T-cell (primary cell): ENCODE measurements at regions of chr7 and their contacts with region 1.

Region 1: DNA sequence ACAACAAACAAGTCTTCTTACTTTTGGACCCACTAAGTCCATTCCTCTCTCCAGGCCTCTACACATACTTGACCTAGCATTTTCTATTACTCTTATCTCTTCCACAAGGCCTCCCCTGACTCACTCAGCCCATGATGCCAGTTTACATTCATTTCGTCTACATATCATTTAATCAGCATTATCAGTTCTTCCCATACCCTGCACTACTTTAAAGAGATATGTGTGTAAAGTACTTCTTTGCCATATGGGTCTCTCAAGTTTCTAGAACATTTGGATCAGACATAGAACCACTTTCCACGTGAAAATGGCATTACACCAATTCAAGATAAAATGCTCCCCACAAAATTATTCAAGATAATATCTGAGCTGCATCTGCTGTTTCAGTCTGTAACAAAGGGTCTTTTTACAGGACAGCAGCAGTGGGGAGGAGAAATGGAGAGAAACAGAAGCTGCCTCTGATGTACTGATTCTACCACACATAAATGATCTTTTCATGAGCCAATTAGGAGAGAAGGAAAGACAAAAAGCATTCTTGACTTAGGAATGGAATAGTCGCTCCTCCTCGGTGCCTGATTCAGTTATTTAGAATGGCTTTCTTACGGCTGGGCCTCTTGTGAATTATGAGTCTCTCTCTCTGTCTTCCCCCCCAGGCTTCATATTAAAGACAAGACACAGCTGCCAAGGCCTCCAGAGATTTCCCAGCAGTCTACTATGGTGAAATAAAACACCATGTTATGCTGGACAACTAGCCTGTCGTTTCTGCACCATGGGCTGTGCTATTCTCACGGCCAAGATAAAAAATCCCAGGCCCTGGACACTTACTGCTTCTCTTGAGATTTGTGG is 46.9 kb upstream of the SEPTIN7 start:
- DNase-seq: no peak
- ATAC-seq: no peak
- H3K4me3 ChIP-seq: no peak overlapping the region
- H3K4me3 Mint-ChIP-seq: no peak overlapping the region
- H3K27ac ChIP-seq: no peak overlapping the region
- H3K27ac Mint-ChIP-seq: no peak overlapping the region
- H3K4me1 ChIP-seq: no peaks in the 10 kb centered on the region
- H3K4me1 Mint-ChIP-seq: peaks cover 6 to 13% (median 7%) of the 10 kb centered on the region in 3 donors
- H3K27me3 ChIP-seq: peaks cover 0 to 3% of the 10 kb centered on the region in 2 experiments
- H3K27me3 Mint-ChIP-seq: no peaks in the 10 kb centered on the region

Region 2: GRCh38 chr7:35670856-35671569 is 83.0 kb before region 1 on chr7:
- CTCF ChIA-PET with region 1: no interaction called
- POLR2A ChIA-PET with region 1: no interaction called
- DNase-seq: no peak
- ATAC-seq: no peak
- H3K4me3 ChIP-seq: no peak overlapping the region
- H3K4me3 Mint-ChIP-seq: no peak overlapping the region
- H3K27ac ChIP-seq: no peak overlapping the region
- H3K27ac Mint-ChIP-seq: peak overlapping the region in 1 of 2 donors; percentile 20
- H3K4me1 ChIP-seq: peaks cover 0 to 4% of the 10 kb centered on the region in 2 experiments
- H3K4me1 Mint-ChIP-seq: peaks cover 34 to 58% (median 52%) of the 10 kb centered on the region in 3 donors
- H3K27me3 ChIP-seq: no peaks in the 10 kb centered on the region
- H3K27me3 Mint-ChIP-seq: no peaks in the 10 kb centered on the region

Region 3: DNA sequence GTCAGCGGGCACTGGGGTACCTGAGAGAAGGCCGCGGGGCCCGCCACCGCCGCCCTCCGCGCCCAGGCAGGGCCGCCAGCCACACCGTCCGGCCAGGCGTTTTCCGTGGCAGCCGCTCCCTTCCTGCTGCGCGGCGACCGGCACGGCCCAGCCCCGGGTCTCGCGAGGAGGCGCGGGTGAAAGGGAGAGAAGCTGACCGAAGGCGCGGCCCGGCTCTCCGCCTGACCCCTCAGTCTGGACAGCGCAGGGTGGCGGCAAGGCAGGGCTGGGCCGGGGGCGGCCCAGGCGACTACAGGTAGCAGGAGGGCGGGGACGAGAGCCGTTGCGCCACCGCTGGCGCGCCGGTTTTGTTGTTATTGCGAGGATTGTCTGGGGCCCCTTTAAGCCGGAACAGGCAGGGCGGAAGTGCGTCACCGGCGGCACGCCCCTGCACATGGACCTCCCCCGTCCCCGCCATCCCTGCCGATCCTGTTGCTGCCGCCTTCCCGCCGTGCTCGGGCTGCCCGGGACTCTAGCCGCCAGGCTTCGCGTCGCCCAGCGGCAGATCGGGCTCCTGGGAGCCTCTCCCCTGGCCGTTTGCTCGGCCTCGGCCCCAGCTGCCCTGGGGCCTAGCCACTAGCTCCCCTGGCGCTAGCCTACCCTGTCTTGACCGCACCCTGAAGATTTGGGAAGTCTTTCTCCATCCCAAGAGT is 59.1 kb before region 1 on chr7 and contains the start of gene HERPUD2:
- CTCF ChIA-PET with region 1: no interaction called
- POLR2A ChIA-PET with region 1: interaction called in 1 of 2 experiments, 10 read pairs
- DNase-seq: peak; percentile 78 to 96 (median 91)
- ATAC-seq: peak; percentile 87 to 88 (median 88)
- H3K4me3 ChIP-seq: peak within 1 kb of the TSS; percentile 92 to 96
- H3K4me3 Mint-ChIP-seq: peak within 1 kb of the TSS; percentile 97 to 99 (median 97)
- H3K27ac ChIP-seq: peak within 1 kb of the TSS; percentile 94
- H3K27ac Mint-ChIP-seq: peak within 1 kb of the TSS; percentile 98 to 99
- H3K4me1 ChIP-seq: peaks cover 26 to 32% of the 10 kb centered on the region in 2 experiments
- H3K4me1 Mint-ChIP-seq: peaks cover 48 to 64% (median 57%) of the 10 kb centered on the region in 3 donors
- H3K27me3 ChIP-seq: no peaks in the 10 kb centered on the region
- H3K27me3 Mint-ChIP-seq: no peaks in the 10 kb centered on the region
- total RNA-seq, gene HERPUD2: 58.4 to 122 (median 67.5) TPM

Region 4: GRCh38 chr7:35900651-35901050 is 146.7 kb after region 1 on chr7:
- CTCF ChIA-PET with region 1: interaction called in 1 of 2 experiments, 10 read pairs
- POLR2A ChIA-PET with region 1: no interaction called
- DNase-seq: no peak
- ATAC-seq: no peak
- H3K4me3 ChIP-seq: no peak overlapping the region
- H3K4me3 Mint-ChIP-seq: no peak overlapping the region
- H3K27ac ChIP-seq: no peak overlapping the region
- H3K27ac Mint-ChIP-seq: peak overlapping the region in 1 of 2 donors; percentile 68
- H3K4me1 ChIP-seq: no peaks in the 10 kb centered on the region
- H3K4me1 Mint-ChIP-seq: peaks cover 0 to 5% (median 2%) of the 10 kb centered on the region in 3 donors
- H3K27me3 ChIP-seq: no peaks in the 10 kb centered on the region
- H3K27me3 Mint-ChIP-seq: no peaks in the 10 kb centered on the region